ENCODE measurements at regions of chr3 and their contacts with region 1.

Region 1: GRCh38 chr3:197224034-197224444 is 74.4 kb downstream of the DLG1 start:
- DNase-seq: peak; percentile 56
- ATAC-seq: peak; percentile 58; the same call in 2 of the 3 replicates
- H3K4me3 ChIP-seq: no peak overlapping the region
- H3K27ac ChIP-seq: no peak overlapping the region
- H3K4me1 ChIP-seq: peaks cover 28% of the 10 kb centered on the region
- H3K27me3 ChIP-seq: no peaks in the 10 kb centered on the region
- CTCF ChIP-seq: peak; percentile 62
- EP300 ChIP-seq: no peak
- POLR2A ChIP-seq: no peak
- RAD21 ChIP-seq: no peak; the same call in 1 of the 2 replicates

Region 2: DNA sequence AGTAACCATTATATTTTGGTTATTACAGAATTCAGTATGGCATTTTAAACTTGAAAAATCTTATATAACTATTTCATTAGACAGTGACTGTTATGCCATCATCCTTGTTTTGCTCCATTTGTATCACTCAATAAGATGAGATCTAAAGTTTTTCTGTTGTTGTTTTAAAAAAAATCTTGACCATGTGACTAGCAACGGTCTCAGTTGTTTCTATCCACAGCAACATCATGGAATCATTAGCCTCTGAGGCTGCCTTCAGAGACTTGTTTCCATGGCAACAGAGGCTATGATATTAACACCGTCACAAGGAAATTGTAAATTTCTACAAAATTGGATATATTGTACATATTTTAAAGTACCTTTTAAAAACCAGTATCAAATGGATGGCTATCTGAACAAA is 55.4 kb before region 1 on chr3:
- CTCF ChIA-PET with region 1: no interaction called
- POLR2A ChIA-PET with region 1: no interaction called
- in situ Hi-C with region 1: no loop called
- intact Hi-C with region 1: no loop called
- DNase-seq: no peak
- ATAC-seq: no peak
- H3K4me3 ChIP-seq: no peak overlapping the region
- H3K27ac ChIP-seq: no peak overlapping the region
- H3K4me1 ChIP-seq: no peaks in the 10 kb centered on the region
- H3K27me3 ChIP-seq: no peaks in the 10 kb centered on the region
- CTCF ChIP-seq: no peak
- EP300 ChIP-seq: no peak
- POLR2A ChIP-seq: no peak
- RAD21 ChIP-seq: no peak

Region 3: DNA sequence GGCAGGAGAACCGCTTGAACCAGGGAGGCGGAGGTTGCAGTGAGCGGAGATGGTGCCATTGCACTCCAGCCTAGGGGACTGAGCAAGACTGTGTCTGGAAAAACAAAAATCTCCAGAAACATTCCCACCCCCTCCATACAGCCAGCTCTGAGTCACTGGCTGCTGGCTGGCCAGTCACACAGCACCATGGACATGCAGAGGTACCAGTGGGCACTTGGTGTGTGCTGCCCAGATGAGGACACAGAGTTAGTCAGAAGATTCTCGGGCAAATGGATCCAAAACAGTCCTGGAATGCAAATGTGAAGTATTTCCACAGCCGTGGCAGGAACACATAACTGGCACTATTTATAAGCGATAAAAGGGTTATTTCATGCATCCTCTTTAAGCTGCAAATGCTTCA is 287.1 kb after region 1 on chr3:
- CTCF ChIA-PET with region 1: interaction called, 12 read pairs
- POLR2A ChIA-PET with region 1: no interaction called
- in situ Hi-C with region 1: no loop called
- intact Hi-C with region 1: no loop called
- DNase-seq: no peak
- ATAC-seq: no peak
- H3K4me3 ChIP-seq: no peak overlapping the region
- H3K27ac ChIP-seq: no peak overlapping the region
- H3K4me1 ChIP-seq: peaks cover 67% of the 10 kb centered on the region
- H3K27me3 ChIP-seq: no peaks in the 10 kb centered on the region; a peak in 1 of 5 replicates
- CTCF ChIP-seq: no peak
- EP300 ChIP-seq: no peak
- POLR2A ChIP-seq: no peak
- RAD21 ChIP-seq: no peak